Heart left ventricle (tissue), 16 donors: ENCODE measurements at regions of chr7 and their contacts with region 1.

Region 1: DNA sequence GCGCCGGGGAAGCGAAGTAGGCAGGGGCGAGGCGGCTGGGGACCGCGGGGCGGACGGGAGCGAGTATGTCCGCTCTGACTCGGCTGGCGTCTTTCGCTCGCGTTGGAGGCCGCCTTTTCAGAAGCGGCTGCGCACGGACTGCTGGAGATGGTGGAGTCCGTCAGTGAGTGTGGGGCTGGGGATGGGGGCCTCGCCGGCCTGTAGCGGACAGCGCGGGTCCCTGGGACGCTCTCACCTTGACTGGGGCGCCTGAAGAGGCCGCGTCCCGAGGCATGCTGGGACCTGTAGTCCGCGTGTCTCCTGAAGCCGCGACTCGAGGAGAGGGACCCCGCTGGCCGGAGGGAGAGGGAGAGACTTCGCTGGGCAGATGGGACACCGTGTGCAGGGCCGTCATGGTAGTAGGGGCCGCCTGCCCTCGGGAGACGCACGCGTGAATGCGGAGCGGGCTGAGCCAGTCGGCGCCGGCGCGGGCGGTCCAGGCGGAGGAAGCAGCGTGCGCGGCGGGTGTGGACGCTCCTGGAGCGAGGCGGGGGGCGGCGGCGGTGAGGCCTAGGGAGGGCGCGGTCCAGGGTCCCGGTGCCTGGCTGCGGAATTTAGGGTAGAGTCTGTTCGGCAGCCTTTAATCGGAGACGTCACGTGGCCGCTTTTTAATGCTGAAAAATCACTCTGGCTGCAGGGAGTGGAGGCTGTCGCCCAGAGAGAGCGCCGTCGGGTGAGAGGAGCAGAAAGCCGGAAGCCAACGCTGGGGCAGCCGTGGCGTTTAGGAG is at the start of gene NDUFB2:
- DNase-seq: peak in 4 of 5 donors; percentile 75 to 88 (median 83)
- ATAC-seq: peak; percentile 90 to 94 (median 93)
- H3K4me3 ChIP-seq: peak within 1 kb of the TSS; percentile 49 to 91 (median 82)
- H3K27ac ChIP-seq: peak within 1 kb of the TSS; percentile 90 to 99 (median 96)
- H3K4me1 ChIP-seq: peaks cover 4 to 32% (median 23%) of the 10 kb centered on the region in 12 donors
- H3K27me3 ChIP-seq: no peaks in the 10 kb centered on the region
- CTCF ChIP-seq: no peak
- POLR2A ChIP-seq: peak in 1 of 2 donors; percentile 93
- total RNA-seq, gene NDUFB2: 458 to 1,005 (median 615) TPM

Region 2: DNA sequence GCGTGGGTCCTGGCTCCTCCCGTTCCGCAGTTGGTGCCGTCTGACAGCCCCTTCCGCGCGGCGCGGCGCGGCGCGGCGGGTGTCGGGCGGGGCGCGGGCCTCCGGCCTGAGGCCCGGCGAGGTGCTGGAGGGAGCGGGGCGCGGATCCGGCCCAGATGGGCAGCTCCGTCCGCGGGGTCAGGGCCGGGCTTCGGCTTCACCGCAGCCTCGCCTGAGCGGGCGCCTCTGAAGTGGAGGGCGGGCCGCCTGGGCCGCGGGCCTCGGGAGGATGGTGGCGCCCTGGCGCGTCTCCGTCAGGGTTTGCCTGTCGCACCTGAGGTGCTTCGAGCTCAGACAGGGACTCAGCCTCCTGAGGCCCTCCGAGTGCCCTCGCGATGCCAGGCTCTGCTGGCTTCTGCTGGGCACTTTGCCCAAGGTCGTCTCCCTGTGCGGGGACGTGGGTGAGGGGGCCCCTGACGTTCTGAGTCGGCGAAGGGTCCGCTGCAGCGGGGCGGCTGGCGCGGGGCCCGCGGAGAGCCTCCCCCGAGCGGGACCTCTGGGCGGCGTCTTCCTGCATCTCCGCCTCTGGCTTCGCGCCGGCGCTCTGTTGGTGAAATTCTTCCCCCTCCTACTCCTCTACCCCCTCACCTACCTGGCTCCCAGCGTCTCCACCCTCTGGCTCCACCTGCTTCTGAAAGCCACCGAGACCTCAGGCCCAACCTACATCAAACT is 23.6 kb before region 1 on chr7:
- intact Hi-C with region 1: loop called in 1 of 10 experiments (anchors 2 kb)
- DNase-seq: peak; percentile 45 to 78 (median 48)
- ATAC-seq: peak in 3 of 4 donors; percentile 31 to 73 (median 53)
- H3K4me3 ChIP-seq: peak overlapping the region; percentile 54 to 97 (median 80)
- H3K27ac ChIP-seq: peak overlapping the region; percentile 62 to 89 (median 79)
- H3K4me1 ChIP-seq: peaks cover 0 to 37% (median 21%) of the 10 kb centered on the region in 12 donors
- H3K27me3 ChIP-seq: no peaks in the 10 kb centered on the region
- CTCF ChIP-seq: peak in 2 of 12 donors; percentile 5 to 8
- POLR2A ChIP-seq: no peak

Region 3: DNA sequence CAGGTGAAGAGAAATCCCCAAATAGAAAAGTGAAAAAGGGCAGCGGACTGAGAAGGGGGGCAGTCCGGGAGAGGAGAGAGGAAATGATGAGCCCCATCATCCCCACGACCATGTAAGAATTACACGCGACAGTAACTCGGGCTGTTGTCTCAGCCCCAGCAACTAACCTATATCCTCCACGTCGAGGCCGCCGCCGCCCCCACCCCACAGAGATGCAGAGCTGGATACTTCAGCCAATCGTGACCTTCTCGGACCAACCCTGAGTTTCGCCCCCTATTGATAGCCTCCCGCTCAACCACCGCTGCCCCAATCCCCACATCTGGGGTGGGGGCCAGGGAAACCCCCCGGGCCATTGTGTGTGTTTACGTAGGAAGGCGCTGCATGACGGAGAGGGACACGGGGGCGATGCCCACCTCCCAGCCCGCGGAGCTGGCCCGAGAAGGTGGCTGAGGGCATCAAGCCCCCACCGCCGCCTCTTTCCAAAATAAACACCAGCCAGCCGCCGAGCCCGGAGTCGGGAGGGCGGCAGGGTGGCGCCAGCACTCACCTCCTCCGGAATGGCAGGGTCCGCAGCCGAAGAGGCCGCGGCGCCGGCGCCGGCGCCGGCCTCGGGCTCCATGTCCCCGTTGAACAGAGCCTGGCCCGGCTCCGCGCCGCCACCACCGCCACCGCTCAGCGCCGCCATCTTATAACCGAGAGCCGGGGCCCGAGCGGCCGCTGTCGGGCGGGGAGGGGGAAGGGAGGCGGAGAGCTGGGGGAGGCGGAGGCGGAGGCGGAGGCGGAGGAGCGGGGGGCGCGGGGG is 227.4 kb after region 1 on chr7:
- intact Hi-C with region 1: loop called in 3 of 10 experiments (anchors 10 kb)
- DNase-seq: peak; percentile 78 to 92 (median 83)
- ATAC-seq: peak; percentile 57 to 86 (median 80)
- H3K4me3 ChIP-seq: peak overlapping the region; percentile 75 to 99 (median 92)
- H3K27ac ChIP-seq: peak overlapping the region; percentile 95 to 100 (median 98)
- H3K4me1 ChIP-seq: peaks cover 0 to 46% (median 31%) of the 10 kb centered on the region in 12 donors
- H3K27me3 ChIP-seq: no peaks in the 10 kb centered on the region
- CTCF ChIP-seq: peak in 9 of 12 donors; percentile 19 to 61 (median 43)
- POLR2A ChIP-seq: peak in 1 of 2 donors; percentile 26

Region 4: DNA sequence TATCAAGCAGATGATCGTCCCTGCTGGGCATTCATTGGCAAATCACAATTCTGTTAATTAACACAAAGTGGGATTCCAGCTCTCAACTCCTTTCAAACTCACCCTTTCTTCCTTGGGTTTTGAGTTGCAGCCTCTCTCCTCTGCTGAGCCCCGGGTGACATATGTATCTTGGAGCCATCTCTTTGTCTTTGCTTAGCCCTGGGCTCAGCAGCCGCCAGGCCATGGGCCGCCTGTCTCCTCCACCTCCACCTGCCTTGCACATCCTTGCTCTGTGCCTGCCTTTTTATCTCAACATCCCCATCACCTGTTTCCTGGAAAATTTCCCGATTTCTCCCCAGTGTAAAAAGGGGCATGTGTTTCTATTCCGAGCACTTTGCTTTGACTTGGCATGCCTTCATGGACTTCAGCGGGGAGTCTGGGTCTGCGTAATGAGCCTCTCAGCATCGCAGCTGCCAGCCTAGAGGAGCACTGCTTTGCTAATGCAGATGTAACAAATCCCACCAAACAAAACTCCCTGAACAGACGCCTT is 713.0 kb after region 1 on chr7:
- intact Hi-C with region 1: no loop called
- DNase-seq: no peak
- ATAC-seq: peak in 3 of 4 donors; percentile 44 to 53 (median 51)
- H3K4me3 ChIP-seq: no peak overlapping the region
- H3K27ac ChIP-seq: no peak overlapping the region
- H3K4me1 ChIP-seq: peaks cover 0 to 29% (median 0%) of the 10 kb centered on the region in 12 donors
- H3K27me3 ChIP-seq: no peaks in the 10 kb centered on the region
- CTCF ChIP-seq: no peak
- POLR2A ChIP-seq: no peak